Natural killer cell (primary cell): ENCODE measurements at regions of chr18 and their contacts with region 1.

Region 1: DNA sequence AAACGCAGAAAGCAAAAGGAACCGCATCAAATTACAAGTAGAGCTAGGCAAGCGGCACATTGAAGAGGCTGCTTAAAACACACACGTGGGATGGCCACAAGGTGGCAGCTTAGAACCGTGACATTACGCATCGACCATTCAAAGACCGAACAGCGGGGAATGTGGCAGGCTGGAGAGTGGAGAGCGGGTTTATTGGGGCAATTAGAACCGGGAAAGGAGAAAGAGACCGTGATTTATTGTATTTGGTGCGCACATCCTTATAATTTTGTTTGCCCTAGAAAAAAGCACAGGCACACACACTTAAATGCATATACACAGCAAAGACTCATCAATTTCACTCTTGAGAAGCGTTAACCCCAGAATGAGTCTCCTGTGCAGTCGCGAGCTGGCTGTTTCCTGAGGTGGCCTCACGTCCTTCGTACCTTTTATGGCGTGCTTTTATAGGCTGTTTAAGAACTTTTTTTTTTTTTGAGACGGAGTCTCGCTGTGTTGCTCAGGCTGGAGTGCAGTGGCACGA is 31.7 kb upstream of the MEP1B start:
- DNase-seq: peak; percentile 58 to 89
- ATAC-seq: peak; percentile 83 to 93 (median 93)
- H3K4me3 ChIP-seq: peak overlapping the region; percentile 29
- H3K4me3 Mint-ChIP-seq: peak overlapping the region; percentile 74
- H3K27ac ChIP-seq: no peak overlapping the region
- H3K27ac Mint-ChIP-seq: peak overlapping the region in 1 of 2 donors; percentile 53
- H3K4me1 ChIP-seq: peaks cover 9% of the 10 kb centered on the region
- H3K4me1 Mint-ChIP-seq: peaks cover 8% of the 10 kb centered on the region in 2 donors
- H3K27me3 ChIP-seq: no peaks in the 10 kb centered on the region
- H3K27me3 Mint-ChIP-seq: no peaks in the 10 kb centered on the region
- CTCF ChIP-seq: peak; percentile 87

Region 2: DNA sequence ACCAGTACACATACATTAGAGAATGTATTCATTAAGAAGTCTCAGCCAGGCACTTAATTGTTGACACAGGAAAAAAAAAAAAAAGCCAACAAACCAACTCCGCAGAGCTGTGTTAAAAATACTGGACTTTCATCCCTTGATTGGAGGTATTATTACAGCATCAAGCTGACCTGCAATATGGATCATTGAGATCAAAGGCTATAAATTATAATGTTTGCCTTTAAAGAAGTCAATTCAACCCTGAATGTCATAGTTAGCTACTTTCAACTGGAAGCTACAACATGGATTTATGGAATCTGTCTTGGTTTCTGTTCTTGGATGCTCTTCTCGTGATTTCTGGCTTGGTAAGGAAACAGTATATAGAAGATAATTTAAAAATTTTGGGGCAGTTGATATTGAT is 31.6 kb after region 1 on chr18 and contains the start of gene MEP1B:
- intact Hi-C with region 1: no loop called
- DNase-seq: no peak
- ATAC-seq: no peak
- H3K4me3 ChIP-seq: no peak within 1 kb of the TSS
- H3K4me3 Mint-ChIP-seq: no peak within 1 kb of the TSS
- H3K27ac ChIP-seq: no peak within 1 kb of the TSS
- H3K27ac Mint-ChIP-seq: no peak within 1 kb of the TSS
- H3K4me1 ChIP-seq: no peaks in the 10 kb centered on the region
- H3K4me1 Mint-ChIP-seq: no peaks in the 10 kb centered on the region
- H3K27me3 ChIP-seq: no peaks in the 10 kb centered on the region
- H3K27me3 Mint-ChIP-seq: peaks cover 11 to 24% of the 10 kb centered on the region in 2 donors
- CTCF ChIP-seq: no peak
- total RNA-seq, gene MEP1B: not detected

Region 3: DNA sequence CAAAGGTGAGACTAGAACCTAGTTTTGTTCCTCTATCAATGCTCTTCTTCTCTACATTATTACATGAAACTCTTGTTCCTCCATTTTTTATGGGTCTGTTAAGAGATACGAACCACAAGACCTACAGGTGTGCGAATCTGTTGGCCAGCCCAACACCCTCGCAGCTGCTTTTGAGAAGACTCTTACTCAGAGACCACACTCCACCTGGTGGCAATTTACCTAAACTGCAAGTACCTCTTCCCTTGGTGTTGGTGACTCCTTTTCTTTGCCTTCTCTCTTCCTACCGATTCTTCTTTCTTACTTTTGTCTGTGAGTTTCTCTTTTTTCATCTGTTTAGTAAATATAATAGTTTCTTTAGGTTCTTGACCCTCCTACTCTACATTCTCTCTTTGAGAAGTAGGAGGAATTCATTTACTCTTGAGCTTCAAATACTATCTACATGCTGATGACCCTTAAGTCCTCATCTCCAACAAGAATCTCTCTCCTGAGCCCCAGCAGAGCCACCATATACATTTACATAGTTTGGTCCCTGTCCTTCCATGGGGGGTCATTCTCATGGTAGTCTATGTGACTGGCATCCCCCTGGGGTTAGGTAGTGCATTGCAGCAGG is 394.4 kb after region 1 on chr18:
- intact Hi-C with region 1: loop called (anchors 1 kb)
- DNase-seq: peak in 1 of 2 donors; percentile 82
- ATAC-seq: peak; percentile 62 to 75 (median 66)
- H3K4me3 ChIP-seq: no peak overlapping the region
- H3K4me3 Mint-ChIP-seq: no peak overlapping the region
- H3K27ac ChIP-seq: no peak overlapping the region
- H3K27ac Mint-ChIP-seq: no peak overlapping the region
- H3K4me1 ChIP-seq: no peaks in the 10 kb centered on the region
- H3K4me1 Mint-ChIP-seq: no peaks in the 10 kb centered on the region
- H3K27me3 ChIP-seq: no peaks in the 10 kb centered on the region
- H3K27me3 Mint-ChIP-seq: peaks cover 8 to 28% of the 10 kb centered on the region in 2 donors
- CTCF ChIP-seq: peak; percentile 62